Right lobe of liver (tissue), 6 donors: ENCODE measurements at regions of chr2 and their contacts with region 1.

Region 1: GRCh38 chr2:216404010-216404618 is 8.2 kb upstream of the SMARCAL1 start:
- DNase-seq: peak in 2 of 3 donors; percentile 31 to 53
- ATAC-seq: peak; percentile 93 to 95 (median 94)
- H3K4me3 ChIP-seq: no peak overlapping the region
- H3K27ac ChIP-seq: no peak overlapping the region
- H3K4me1 ChIP-seq: no peaks in the 10 kb centered on the region
- H3K27me3 ChIP-seq: no peaks in the 10 kb centered on the region
- CTCF ChIP-seq: peak; percentile 73 to 87 (median 82)
- POLR2A ChIP-seq: no peak

Region 2: GRCh38 chr2:216114714-216115557 is 289.2 kb before region 1 on chr2:
- intact Hi-C with region 1: loop called in 1 of 2 experiments (anchors 10 kb)
- DNase-seq: peak; percentile 97 to 99 (median 98)
- ATAC-seq: peak; percentile 92 to 94 (median 92)
- H3K4me3 ChIP-seq: peak overlapping the region; percentile 38 to 50 (median 46)
- H3K27ac ChIP-seq: peak overlapping the region; percentile 79 to 88 (median 84)
- H3K4me1 ChIP-seq: peaks cover 0 to 40% (median 13%) of the 10 kb centered on the region in 4 donors
- H3K27me3 ChIP-seq: no peaks in the 10 kb centered on the region
- CTCF ChIP-seq: peak; percentile 87 to 92 (median 88)
- POLR2A ChIP-seq: peak; percentile 28

Region 3: DNA sequence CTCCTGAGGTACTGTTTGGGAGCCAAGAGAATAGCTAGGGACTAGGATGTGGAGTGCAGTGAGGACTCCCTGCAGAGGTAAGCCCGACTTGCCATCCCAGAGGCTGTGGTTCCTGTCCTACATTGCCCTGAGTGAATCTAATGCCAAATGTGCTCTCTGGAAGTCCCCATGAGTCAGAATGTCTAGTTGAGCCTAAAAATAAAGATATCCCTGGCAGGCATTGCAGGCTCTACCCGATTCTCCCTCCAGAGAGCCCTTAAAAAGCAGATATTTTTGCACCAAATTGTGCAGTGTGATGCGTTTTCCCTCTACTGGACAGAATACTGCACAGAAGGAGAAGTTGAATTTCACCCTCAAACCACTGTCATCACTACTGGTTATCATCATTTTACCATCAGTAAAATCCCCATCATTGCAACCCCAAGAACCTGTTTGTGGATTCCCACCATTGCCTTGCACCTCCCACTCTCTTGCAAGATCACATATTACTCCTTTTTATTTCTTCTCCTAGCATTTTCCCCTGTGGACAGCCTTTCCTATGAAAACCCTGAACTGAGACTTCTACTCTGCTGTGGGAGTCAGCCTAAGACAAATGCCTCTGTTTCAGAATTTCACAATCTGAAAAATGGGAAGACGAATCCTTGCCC is 129.8 kb before region 1 on chr2:
- intact Hi-C with region 1: no loop called
- DNase-seq: no peak
- ATAC-seq: no peak
- H3K4me3 ChIP-seq: no peak overlapping the region
- H3K27ac ChIP-seq: no peak overlapping the region
- H3K4me1 ChIP-seq: no peaks in the 10 kb centered on the region
- H3K27me3 ChIP-seq: no peaks in the 10 kb centered on the region
- CTCF ChIP-seq: no peak
- POLR2A ChIP-seq: no peak